Activated naive CD4-positive, alpha-beta T cell treated with anti-CD3 and anti-CD28 coated beads, Interleukin-2, amount 10 ng/mL, durations not matched to agents 7 days and 5 days (primary cell): ENCODE measurements at regions of chr15 and their contacts with region 1.

Region 1: DNA sequence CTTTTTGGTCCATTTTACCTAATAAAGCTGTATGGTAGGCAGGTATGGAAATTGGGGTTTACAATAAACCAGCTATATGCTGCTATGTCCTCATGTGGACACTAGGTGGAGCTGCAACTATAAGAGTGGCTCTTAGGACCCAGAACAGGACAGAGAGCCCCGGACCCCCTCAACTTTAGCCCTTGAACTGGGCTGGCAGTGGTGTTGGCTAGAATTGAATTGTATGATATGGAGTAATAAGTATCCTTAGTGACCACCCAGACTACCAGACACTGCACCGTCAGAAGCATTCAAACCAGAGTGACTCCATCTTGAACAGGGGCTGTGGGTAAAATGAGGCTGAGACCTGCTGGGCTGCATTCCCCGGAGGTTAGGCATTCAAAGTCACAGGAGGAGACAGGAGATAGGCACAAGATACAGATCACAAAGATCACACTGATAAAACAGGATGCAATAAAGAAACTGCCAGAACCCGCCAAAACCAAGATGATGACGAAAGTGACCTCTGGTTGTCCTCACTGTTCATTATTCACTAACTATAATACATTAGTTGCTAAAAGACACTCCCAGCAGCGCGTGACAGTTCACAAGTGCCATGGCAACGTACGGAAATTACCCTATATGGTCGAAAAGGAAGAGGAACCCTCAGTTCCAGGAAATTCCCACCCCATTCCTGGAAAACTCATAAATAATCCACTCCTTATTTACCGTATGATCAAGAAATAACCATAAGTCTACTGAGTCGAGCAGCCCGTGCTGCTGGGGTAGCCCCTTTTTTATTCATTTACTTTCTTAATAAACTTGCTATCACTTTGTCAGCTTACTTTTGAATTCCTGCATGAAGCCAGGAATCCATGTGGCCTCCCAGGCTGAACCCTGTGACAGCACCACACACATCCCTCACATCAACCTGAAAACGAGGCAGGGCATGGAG is 68.7 kb upstream of the BLM start:
- DNase-seq: peak; percentile 83
- H3K4me3 Mint-ChIP-seq: peak overlapping the region; percentile 29
- H3K27ac Mint-ChIP-seq: peak overlapping the region; percentile 97
- H3K4me1 Mint-ChIP-seq: peaks cover 51% of the 10 kb centered on the region
- H3K27me3 Mint-ChIP-seq: peaks cover 9% of the 10 kb centered on the region

Region 2: DNA sequence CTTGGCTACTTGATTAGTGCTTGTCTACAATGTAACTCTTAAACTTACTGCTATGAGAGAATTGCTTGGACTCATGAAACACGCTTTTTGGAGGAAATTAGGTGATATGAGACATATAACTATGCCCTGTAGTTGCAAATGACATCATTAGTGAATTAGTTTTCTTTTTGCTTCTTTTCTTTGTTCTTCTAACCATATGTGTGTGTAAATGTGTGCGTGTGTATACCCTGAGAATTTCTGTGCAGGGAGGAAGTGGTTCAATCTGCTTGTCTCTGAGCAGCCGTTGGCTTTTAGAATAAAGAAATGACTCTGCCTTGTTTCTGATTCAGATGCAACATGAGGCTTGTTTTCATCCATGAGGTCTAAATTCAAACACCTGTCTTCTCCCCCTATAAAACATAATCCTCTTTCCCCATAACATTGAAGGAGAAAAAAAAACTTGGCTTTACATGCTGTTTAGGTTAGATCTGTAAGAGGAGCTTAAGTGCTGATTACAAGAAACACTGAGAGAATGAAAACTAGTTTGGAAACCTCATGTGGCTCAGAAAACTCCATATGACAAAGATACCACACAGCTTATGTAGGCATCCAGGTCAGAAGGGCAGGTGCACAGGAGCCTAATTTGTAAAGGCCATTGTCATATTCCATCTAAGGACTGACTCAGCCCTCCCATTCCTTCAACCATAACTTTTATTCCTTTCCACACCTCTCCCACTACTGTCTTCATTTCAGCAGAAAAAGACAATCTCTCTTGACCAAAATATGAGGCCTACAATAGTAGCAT is 38.2 kb after region 1 on chr15:
- CTCF ChIA-PET with region 1: interaction called, 72 read pairs
- DNase-seq: peak; percentile 60
- H3K4me3 Mint-ChIP-seq: peak overlapping the region; percentile 4
- H3K27ac Mint-ChIP-seq: peak overlapping the region; percentile 97
- H3K4me1 Mint-ChIP-seq: peaks cover 61% of the 10 kb centered on the region
- H3K27me3 Mint-ChIP-seq: peaks cover 8% of the 10 kb centered on the region

Region 3: GRCh38 chr15:90691982-90692773 is 43.8 kb after region 1 on chr15:
- CTCF ChIA-PET with region 1: interaction called, 72 read pairs
- DNase-seq: no peak
- H3K4me3 Mint-ChIP-seq: no peak overlapping the region
- H3K27ac Mint-ChIP-seq: peak overlapping the region; percentile 3
- H3K4me1 Mint-ChIP-seq: peaks cover 68% of the 10 kb centered on the region
- H3K27me3 Mint-ChIP-seq: no peaks in the 10 kb centered on the region